Caco-2 (cell line): ENCODE measurements at regions of chr4 and their contacts with region 1.

Region 1: DNA sequence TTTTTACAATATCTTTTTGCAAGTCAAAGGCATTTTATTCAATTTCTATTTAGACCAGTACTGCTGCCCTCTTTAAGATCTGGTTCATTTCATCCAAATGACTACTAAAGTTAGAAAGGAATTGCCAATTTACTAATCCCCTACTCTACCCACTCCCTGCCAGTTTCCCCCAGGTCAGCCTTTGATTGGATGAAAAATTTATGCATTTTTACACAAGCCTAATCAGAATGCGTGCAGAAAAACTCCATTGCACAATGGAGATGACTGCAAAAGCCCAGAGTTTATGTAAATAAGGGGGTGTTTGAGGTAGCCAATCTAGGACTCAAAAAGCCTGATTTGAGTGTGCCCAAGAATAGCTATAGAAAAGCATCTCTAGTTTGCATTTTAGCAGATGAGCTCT is 310.6 kb downstream of the PABPC4L start:
- DNase-seq: no peak
- H3K4me3 ChIP-seq: no peak overlapping the region
- H3K4me3 Mint-ChIP-seq: no peak overlapping the region
- H3K27ac Mint-ChIP-seq: no peak overlapping the region
- H3K4me1 ChIP-seq: no peaks in the 10 kb centered on the region
- H3K4me1 Mint-ChIP-seq: no peaks in the 10 kb centered on the region
- H3K27me3 ChIP-seq: no peaks in the 10 kb centered on the region
- H3K27me3 Mint-ChIP-seq: no peaks in the 10 kb centered on the region
- CTCF ChIP-seq: no peak

Region 2: DNA sequence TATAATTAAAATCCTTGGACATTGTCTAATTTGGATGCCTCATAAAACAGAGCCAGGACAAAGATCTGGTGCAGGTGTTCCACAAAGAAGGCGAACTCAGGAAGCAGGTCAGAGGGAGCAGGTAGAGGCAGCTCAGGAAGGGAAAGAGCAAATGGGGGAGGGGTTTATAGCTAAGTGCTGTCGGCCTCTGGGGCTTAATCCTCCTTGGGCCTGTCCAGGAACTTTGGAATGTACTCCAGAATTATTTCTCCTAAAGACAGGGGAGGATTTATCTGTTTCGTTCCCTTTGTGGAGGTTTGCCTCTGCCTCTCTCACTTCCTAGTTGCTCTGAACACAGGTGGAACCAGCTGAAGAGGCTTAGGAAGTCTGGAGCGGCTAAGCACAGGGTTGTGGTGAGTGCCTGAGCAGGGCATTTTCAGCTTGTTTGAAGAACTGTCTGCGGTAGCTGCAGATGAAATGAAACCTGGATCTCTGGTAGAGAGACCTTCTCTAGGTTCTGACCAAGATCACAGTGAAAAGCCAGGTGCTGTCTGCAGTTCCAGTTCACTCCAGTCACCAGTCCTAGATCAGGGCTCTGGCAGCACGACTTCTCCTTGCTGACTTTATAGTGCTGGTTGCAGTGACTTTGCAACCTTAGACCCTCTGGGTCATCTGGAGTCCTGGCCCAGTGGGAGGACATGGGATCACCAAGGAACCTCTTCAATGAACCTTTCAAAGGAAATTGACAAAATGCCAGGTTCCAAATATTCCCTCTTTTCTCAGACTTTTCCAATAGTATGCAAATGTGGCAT is 222.8 kb before region 1 on chr4:
- CTCF ChIA-PET with region 1: no interaction called
- POLR2A ChIA-PET with region 1: no interaction called
- intact Hi-C with region 1: loop called (anchors 5 kb)
- DNase-seq: peak in 1 of 2 experiments; percentile 3
- H3K4me3 ChIP-seq: no peak overlapping the region
- H3K4me3 Mint-ChIP-seq: no peak overlapping the region
- H3K27ac Mint-ChIP-seq: no peak overlapping the region
- H3K4me1 ChIP-seq: no peaks in the 10 kb centered on the region
- H3K4me1 Mint-ChIP-seq: no peaks in the 10 kb centered on the region
- H3K27me3 ChIP-seq: no peaks in the 10 kb centered on the region
- H3K27me3 Mint-ChIP-seq: no peaks in the 10 kb centered on the region
- CTCF ChIP-seq: no peak

Region 3: GRCh38 chr4:133808151-133808550 is 82.9 kb before region 1 on chr4:
- CTCF ChIA-PET with region 1: no interaction called
- POLR2A ChIA-PET with region 1: no interaction called
- intact Hi-C with region 1: no loop called
- DNase-seq: no peak
- H3K4me3 ChIP-seq: no peak overlapping the region
- H3K4me3 Mint-ChIP-seq: no peak overlapping the region
- H3K27ac Mint-ChIP-seq: no peak overlapping the region
- H3K4me1 ChIP-seq: no peaks in the 10 kb centered on the region
- H3K4me1 Mint-ChIP-seq: no peaks in the 10 kb centered on the region
- H3K27me3 ChIP-seq: no peaks in the 10 kb centered on the region
- H3K27me3 Mint-ChIP-seq: peaks cover 3% of the 10 kb centered on the region
- CTCF ChIP-seq: no peak

Region 4: GRCh38 chr4:133839326-133839725 is 51.7 kb before region 1 on chr4:
- CTCF ChIA-PET with region 1: no interaction called
- POLR2A ChIA-PET with region 1: no interaction called
- intact Hi-C with region 1: no loop called
- DNase-seq: no peak
- H3K4me3 ChIP-seq: no peak overlapping the region
- H3K4me3 Mint-ChIP-seq: no peak overlapping the region
- H3K27ac Mint-ChIP-seq: no peak overlapping the region
- H3K4me1 ChIP-seq: no peaks in the 10 kb centered on the region
- H3K4me1 Mint-ChIP-seq: no peaks in the 10 kb centered on the region
- H3K27me3 ChIP-seq: no peaks in the 10 kb centered on the region
- H3K27me3 Mint-ChIP-seq: no peaks in the 10 kb centered on the region
- CTCF ChIP-seq: no peak

Region 5: GRCh38 chr4:134174271-134174670 is 283.3 kb after region 1 on chr4:
- CTCF ChIA-PET with region 1: no interaction called
- POLR2A ChIA-PET with region 1: no interaction called
- intact Hi-C with region 1: no loop called
- DNase-seq: no peak
- H3K4me3 ChIP-seq: no peak overlapping the region
- H3K4me3 Mint-ChIP-seq: no peak overlapping the region
- H3K27ac Mint-ChIP-seq: no peak overlapping the region
- H3K4me1 ChIP-seq: no peaks in the 10 kb centered on the region
- H3K4me1 Mint-ChIP-seq: no peaks in the 10 kb centered on the region
- H3K27me3 ChIP-seq: no peaks in the 10 kb centered on the region
- H3K27me3 Mint-ChIP-seq: no peaks in the 10 kb centered on the region
- CTCF ChIP-seq: no peak